ENCODE measurements at regions of chr20 and their contacts with region 1.

Region 1: GRCh38 chr20:45362804-45363610 is at the start of gene SYS1:
- DNase-seq: peak; percentile 97 to 99
- H3K4me3 ChIP-seq: peak within 1 kb of the TSS; percentile 83
- H3K27ac ChIP-seq: peak within 1 kb of the TSS; percentile 76
- H3K4me1 ChIP-seq: peaks cover 29% of the 10 kb centered on the region
- H3K27me3 ChIP-seq: no peaks in the 10 kb centered on the region
- CTCF ChIP-seq: peak; percentile 92
- total RNA-seq, gene SYS1: 35.1 and 38.8 TPM in 2 replicates

Region 2: GRCh38 chr20:45311589-45312211 is 51.3 kb before region 1 on chr20:
- CTCF ChIA-PET with region 1: no interaction called
- POLR2A ChIA-PET with region 1: no interaction called
- intact Hi-C with region 1: no loop called
- DNase-seq: peak in 1 of 2 experiments; percentile 56
- H3K4me3 ChIP-seq: no peak overlapping the region
- H3K27ac ChIP-seq: no peak overlapping the region
- H3K4me1 ChIP-seq: no peaks in the 10 kb centered on the region
- H3K27me3 ChIP-seq: no peaks in the 10 kb centered on the region
- CTCF ChIP-seq: peak; percentile 75

Region 3: GRCh38 chr20:45341939-45342859 is 20.8 kb before region 1 on chr20:
- CTCF ChIA-PET with region 1: interaction called, 5 read pairs
- POLR2A ChIA-PET with region 1: interaction called, 13 read pairs
- intact Hi-C with region 1: loop called (anchors 2 kb)
- DNase-seq: peak; percentile 85 to 88
- H3K4me3 ChIP-seq: peak overlapping the region; percentile 76
- H3K27ac ChIP-seq: peak overlapping the region; percentile 92
- H3K4me1 ChIP-seq: peaks cover 97% of the 10 kb centered on the region
- H3K27me3 ChIP-seq: no peaks in the 10 kb centered on the region
- CTCF ChIP-seq: no peak

Region 4: DNA sequence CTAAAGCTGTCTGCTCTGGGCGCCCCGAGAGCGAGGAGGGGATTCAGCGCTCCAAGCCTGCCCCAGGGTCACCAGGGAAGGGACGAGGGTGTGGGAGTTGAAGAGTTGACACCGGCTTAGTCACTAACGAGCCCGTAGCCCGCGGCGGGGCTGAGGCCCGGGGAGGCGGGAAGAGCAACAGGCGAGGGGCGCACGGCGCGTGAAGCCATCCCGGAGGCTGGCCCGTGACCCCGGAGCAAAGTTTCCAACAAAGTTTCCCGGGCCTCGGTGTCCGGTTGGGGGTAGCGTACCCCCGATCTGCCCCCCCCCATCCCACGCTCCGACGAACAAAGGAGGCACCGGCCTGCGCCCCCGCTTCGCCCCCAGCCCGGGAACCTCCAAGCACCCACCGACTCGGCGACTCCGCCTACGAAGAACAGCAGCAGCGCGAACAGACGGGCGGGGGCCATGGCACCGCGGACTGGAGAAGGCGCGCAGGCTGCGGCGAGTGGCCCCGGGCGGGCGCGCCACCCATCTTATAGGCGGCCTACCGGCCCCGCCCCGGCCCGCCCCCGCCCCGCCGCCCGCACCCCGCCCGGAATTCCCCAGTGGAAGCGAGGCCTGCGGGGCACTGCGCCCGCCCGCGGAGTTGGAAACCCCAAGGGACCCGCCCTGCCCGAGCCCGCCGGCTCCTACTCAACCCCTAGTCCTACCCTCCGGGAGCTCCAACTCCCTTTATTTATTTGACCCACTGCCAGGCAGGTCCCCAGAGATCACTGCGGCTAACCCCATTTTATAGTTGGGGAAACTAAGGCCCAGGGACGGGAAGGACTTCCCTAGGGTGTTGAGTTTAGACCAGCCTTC is 14.8 kb before region 1 on chr20 and contains the start of gene SDC4:
- CTCF ChIA-PET with region 1: interaction called, 4 read pairs
- POLR2A ChIA-PET with region 1: interaction called, 13 read pairs
- intact Hi-C with region 1: loop called (anchors 2 kb)
- DNase-seq: peak; percentile 63 to 80
- H3K4me3 ChIP-seq: peak within 1 kb of the TSS; percentile 76
- H3K27ac ChIP-seq: peak within 1 kb of the TSS; percentile 92
- H3K4me1 ChIP-seq: peaks cover 44% of the 10 kb centered on the region
- H3K27me3 ChIP-seq: no peaks in the 10 kb centered on the region
- CTCF ChIP-seq: 0 out of 2 replicates have a peak, but pooled peaks have one; percentile 21
- total RNA-seq, gene SDC4: 114 and 117 TPM in 2 replicates

Region 5: GRCh38 chr20:45406259-45407066 is 43.5 kb after region 1 on chr20:
- CTCF ChIA-PET with region 1: no interaction called
- POLR2A ChIA-PET with region 1: no interaction called
- intact Hi-C with region 1: loop called (anchors 1 kb)
- DNase-seq: peak; percentile 52 to 68
- H3K4me3 ChIP-seq: peak overlapping the region; percentile 96
- H3K27ac ChIP-seq: peak overlapping the region; percentile 63
- H3K4me1 ChIP-seq: peaks cover 16% of the 10 kb centered on the region
- H3K27me3 ChIP-seq: no peaks in the 10 kb centered on the region
- CTCF ChIP-seq: no peak

Region 6: DNA sequence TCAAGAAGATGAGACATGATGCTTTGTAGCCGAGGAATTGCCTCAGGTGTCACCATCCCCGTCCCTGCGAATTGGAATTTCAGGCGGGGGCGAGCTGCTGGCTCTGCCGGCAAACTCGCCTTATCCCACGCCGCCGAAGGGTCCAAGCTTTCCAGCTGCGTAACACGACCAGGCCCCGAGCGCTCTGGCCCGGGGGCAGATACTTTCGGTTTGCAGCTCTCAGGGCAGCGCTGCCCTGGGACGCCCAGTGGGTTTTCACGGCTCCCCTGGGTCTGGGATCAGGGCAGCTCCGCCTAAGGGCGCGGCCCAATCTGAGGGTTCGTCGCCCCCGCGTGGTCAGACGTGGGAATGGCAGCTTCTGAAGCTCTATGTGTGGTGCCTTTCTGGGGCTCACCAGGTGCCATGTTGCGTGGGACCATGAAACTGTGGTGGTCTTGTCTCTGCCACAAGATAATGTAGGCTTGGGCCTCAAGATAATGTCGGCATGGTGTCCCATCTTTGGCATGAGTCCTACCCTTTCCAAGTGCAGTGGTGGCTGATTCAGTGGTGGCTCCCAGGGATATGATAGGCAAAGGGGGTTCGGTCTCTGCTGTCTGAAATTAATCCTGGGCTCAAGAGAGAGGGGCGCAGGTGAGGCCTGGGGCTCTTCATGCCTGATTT is 73.9 kb after region 1 on chr20:
- CTCF ChIA-PET with region 1: interaction called, 8 read pairs
- POLR2A ChIA-PET with region 1: interaction called, 4 read pairs
- intact Hi-C with region 1: loop called (anchors 5 kb)
- DNase-seq: peak; percentile 70 to 89
- H3K4me3 ChIP-seq: peak overlapping the region; percentile 78
- H3K27ac ChIP-seq: no peak overlapping the region
- H3K4me1 ChIP-seq: peaks cover 14% of the 10 kb centered on the region
- H3K27me3 ChIP-seq: no peaks in the 10 kb centered on the region
- CTCF ChIP-seq: peak; percentile 98

Region 7: DNA sequence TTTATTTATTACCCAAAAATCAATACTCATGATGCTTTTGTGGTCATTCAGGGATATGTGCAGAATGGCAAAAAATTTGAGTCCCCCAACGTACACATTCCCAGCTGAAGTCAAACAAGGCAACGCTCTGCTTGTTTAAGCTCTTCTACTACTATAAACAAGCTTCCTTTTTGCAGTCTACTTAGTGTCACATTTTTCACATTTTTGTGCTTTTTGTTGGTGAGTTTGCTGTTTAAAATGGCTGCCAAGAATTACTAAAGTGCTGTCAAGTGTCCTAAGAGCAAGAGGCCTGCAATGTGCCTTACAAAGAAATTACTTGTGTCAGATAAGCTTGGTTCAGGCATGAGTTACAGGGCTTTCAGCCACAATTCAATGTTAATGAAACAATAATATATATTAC is 214.0 kb after region 1 on chr20:
- CTCF ChIA-PET with region 1: no interaction called
- POLR2A ChIA-PET with region 1: no interaction called
- intact Hi-C with region 1: no loop called
- DNase-seq: no peak
- H3K4me3 ChIP-seq: no peak overlapping the region
- H3K27ac ChIP-seq: no peak overlapping the region
- H3K4me1 ChIP-seq: no peaks in the 10 kb centered on the region
- H3K27me3 ChIP-seq: no peaks in the 10 kb centered on the region
- CTCF ChIP-seq: no peak

Measured in PC-9 (cell line).